T-cell (primary cell): ENCODE measurements at regions of chr7 and their contacts with region 1.

Region 1: GRCh38 chr7:43248961-43249822 is 136.7 kb downstream of the HECW1 start:
- DNase-seq: no peak
- ATAC-seq: no peak
- H3K4me3 ChIP-seq: no peak overlapping the region
- H3K4me3 Mint-ChIP-seq: no peak overlapping the region
- H3K27ac ChIP-seq: no peak overlapping the region
- H3K27ac Mint-ChIP-seq: no peak overlapping the region
- H3K4me1 ChIP-seq: no peaks in the 10 kb centered on the region
- H3K4me1 Mint-ChIP-seq: no peaks in the 10 kb centered on the region
- H3K27me3 ChIP-seq: peaks cover 0 to 16% of the 10 kb centered on the region in 2 experiments
- H3K27me3 Mint-ChIP-seq: peaks cover 17 to 34% of the 10 kb centered on the region in 2 donors

Region 2: GRCh38 chr7:43220250-43220649 is 28.9 kb before region 1 on chr7:
- CTCF ChIA-PET with region 1: no interaction called
- POLR2A ChIA-PET with region 1: interaction called in 1 of 2 experiments, 12 read pairs
- DNase-seq: no peak
- ATAC-seq: no peak
- H3K4me3 ChIP-seq: no peak overlapping the region
- H3K4me3 Mint-ChIP-seq: no peak overlapping the region
- H3K27ac ChIP-seq: no peak overlapping the region
- H3K27ac Mint-ChIP-seq: no peak overlapping the region
- H3K4me1 ChIP-seq: no peaks in the 10 kb centered on the region
- H3K4me1 Mint-ChIP-seq: no peaks in the 10 kb centered on the region
- H3K27me3 ChIP-seq: peaks cover 0 to 11% of the 10 kb centered on the region in 2 experiments
- H3K27me3 Mint-ChIP-seq: peaks cover 15 to 16% of the 10 kb centered on the region in 2 donors